ENCODE measurements at regions of chr13 and their contacts with region 1.

Region 1: DNA sequence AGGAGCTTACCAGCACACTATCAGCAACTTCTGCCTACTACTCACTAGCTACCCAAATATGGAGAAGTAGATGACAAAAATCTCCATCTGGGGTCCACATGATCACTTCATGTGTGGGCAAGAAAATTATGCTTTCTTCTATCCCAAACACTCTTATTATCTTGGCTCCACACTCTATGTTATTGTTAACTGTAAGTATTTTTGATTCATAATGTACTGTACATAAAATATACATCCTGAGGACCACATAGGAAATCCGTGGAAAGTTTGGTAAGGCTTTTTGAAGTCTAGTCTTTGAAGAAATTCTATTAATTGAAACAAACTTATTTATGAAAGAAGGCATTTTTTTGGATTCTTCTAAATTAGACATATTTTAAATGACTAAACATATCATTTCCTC is 378.8 kb downstream of the DACH1 start:
- DNase-seq: no peak
- H3K4me3 ChIP-seq: no peak overlapping the region
- H3K27ac ChIP-seq: no peak overlapping the region
- H3K4me1 ChIP-seq: no peaks in the 10 kb centered on the region
- H3K27me3 ChIP-seq: no peaks in the 10 kb centered on the region
- CTCF ChIP-seq: no peak
- EP300 ChIP-seq: no peak
- POLR2A ChIP-seq: no peak

Region 2: GRCh38 chr13:71801781-71802180 is 313.6 kb after region 1 on chr13:
- in situ Hi-C with region 1: no loop called
- intact Hi-C with region 1: no loop called
- DNase-seq: no peak
- H3K4me3 ChIP-seq: no peak overlapping the region
- H3K27ac ChIP-seq: no peak overlapping the region
- H3K4me1 ChIP-seq: no peaks in the 10 kb centered on the region
- H3K27me3 ChIP-seq: no peaks in the 10 kb centered on the region
- CTCF ChIP-seq: no peak
- EP300 ChIP-seq: no peak
- POLR2A ChIP-seq: no peak

Region 3: GRCh38 chr13:71922194-71922593 is 434.0 kb after region 1 on chr13:
- in situ Hi-C with region 1: no loop called
- intact Hi-C with region 1: loop called (anchors 10 kb)
- DNase-seq: no peak
- H3K4me3 ChIP-seq: no peak overlapping the region
- H3K27ac ChIP-seq: no peak overlapping the region
- H3K4me1 ChIP-seq: no peaks in the 10 kb centered on the region
- H3K27me3 ChIP-seq: no peaks in the 10 kb centered on the region
- CTCF ChIP-seq: no peak
- EP300 ChIP-seq: no peak
- POLR2A ChIP-seq: no peak

Measured in transverse colon (tissue), 4 donors.